ENCODE measurements at regions of chr1 and their contacts with region 1.

Region 1: DNA sequence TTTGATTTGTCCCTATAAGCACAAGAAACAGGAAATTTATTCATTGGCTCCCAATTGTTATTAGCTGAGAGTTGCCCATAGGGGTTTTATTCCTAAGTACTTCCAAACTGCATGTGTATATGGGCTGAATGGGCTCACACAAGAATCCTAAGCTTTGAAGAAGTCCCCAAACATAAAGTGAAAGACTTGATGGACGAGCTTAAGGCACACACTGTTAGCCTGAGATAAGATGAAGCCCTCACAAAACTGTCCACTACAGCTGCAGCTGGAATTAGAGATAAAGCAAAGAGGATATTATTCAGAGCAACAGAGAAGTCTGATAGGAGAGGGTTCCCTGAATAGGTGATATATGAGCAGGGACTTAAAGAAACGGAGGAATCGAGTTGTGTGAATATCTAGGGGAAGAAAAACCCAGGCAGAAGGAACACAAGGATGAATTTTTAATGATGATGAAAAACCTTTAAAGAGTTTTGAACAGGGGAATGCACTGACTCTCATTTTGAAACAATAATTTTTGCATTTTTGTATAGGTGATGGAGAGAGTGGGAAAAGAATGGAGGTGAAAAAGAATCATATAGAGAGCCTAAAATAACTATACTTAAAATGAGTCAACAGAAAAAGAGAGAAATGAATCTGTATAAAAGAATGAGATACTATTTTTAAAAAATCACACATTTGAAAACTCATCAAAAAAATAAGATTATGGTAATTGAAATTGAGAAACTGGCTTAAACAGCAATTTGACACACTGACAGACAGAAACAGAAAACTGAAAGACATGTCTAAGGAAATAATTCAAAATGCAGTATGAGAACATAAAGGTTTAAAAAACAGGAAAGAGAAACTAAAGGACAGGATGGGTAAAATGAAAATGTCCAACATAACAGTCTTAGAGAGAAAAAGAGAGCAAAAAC is 133.6 kb upstream of the POGK start:
- DNase-seq: no peak
- H3K4me3 Mint-ChIP-seq: no peak overlapping the region
- H3K27ac Mint-ChIP-seq: no peak overlapping the region
- H3K4me1 Mint-ChIP-seq: peaks cover 11% of the 10 kb centered on the region
- H3K27me3 Mint-ChIP-seq: peaks cover 24% of the 10 kb centered on the region

Region 2: GRCh38 chr1:166692346-166692745 is 13.3 kb before region 1 on chr1:
- CTCF ChIA-PET with region 1: interaction called, 4 read pairs
- POLR2A ChIA-PET with region 1: no interaction called
- intact Hi-C with region 1: loop called (anchors 2 kb)
- DNase-seq: no peak
- H3K4me3 Mint-ChIP-seq: no peak overlapping the region
- H3K27ac Mint-ChIP-seq: no peak overlapping the region
- H3K4me1 Mint-ChIP-seq: no peaks in the 10 kb centered on the region
- H3K27me3 Mint-ChIP-seq: peaks cover 12% of the 10 kb centered on the region

Region 3: GRCh38 chr1:166822385-166822784 is 116.8 kb after region 1 on chr1:
- CTCF ChIA-PET with region 1: no interaction called
- POLR2A ChIA-PET with region 1: no interaction called
- intact Hi-C with region 1: no loop called
- DNase-seq: no peak
- H3K4me3 Mint-ChIP-seq: no peak overlapping the region
- H3K27ac Mint-ChIP-seq: no peak overlapping the region
- H3K4me1 Mint-ChIP-seq: no peaks in the 10 kb centered on the region
- H3K27me3 Mint-ChIP-seq: peaks cover 5% of the 10 kb centered on the region

Region 4: DNA sequence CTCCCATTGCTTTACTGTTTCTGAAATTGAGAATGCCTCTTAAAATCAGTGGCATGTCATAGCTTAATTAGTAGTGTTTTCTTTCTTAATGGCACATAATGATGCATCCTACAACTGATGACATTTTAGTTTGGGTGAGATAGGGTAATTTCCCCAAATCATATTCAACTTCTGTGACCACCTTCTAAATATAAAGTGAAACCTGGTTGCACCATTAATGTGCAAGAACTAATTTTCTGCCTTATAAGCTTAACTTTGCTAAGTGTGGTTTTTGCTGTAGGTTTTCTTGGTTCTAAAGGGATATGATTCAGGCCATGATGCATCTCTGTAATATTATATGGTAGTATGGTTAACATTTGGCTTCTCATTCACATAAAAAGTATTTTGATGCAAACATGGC is 142.6 kb after region 1 on chr1:
- CTCF ChIA-PET with region 1: no interaction called
- POLR2A ChIA-PET with region 1: no interaction called
- intact Hi-C with region 1: loop called (anchors 1 kb)
- DNase-seq: no peak
- H3K4me3 Mint-ChIP-seq: no peak overlapping the region
- H3K27ac Mint-ChIP-seq: peak overlapping the region; percentile 80
- H3K4me1 Mint-ChIP-seq: peaks cover 80% of the 10 kb centered on the region
- H3K27me3 Mint-ChIP-seq: no peaks in the 10 kb centered on the region

Measured in activated CD4-positive, alpha-beta memory T cell treated with anti-CD3 and anti-CD28 coated beads for 36 hours (primary cell).